ENCODE measurements at regions of chr3 and their contacts with region 1.

Region 1: DNA sequence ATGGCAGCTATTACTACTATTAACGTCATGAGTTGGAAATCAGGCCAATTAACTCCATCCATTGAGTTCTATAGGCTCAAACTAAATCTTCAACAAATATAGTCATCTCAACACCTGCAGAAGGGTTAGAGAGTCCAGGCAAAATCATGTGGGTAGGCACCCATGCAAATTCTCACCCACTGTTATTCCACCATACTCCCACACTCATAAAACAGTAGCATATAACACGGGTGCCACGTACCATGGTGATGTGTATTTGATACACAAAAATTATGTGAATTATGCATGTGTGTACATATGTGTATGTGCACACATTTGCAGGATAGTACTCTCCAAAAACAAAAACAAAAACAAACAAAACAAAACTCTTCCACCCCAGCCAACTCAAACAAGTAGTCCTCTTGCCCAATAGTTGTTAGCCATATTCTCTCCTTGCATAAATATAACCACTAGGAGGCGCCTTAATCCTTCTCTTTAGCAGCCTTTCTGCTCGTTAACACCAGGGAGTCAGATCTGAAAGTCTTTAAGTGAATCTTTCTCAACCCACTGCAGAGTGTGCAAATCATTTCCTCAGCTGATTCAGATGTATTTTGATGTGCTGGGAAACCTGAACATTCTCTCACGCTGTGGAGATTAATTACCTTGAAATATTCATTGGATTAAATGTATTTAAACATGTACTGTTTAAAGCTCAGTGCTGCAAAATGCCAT is 38.0 kb upstream of the COPB2 start:
- DNase-seq: no peak
- H3K4me3 ChIP-seq: no peak overlapping the region
- H3K27ac ChIP-seq: no peak overlapping the region
- H3K27me3 ChIP-seq: no peaks in the 10 kb centered on the region
- CTCF ChIP-seq: peak; percentile 59 to 96 (median 89)

Region 2: GRCh38 chr3:139506766-139507165 is 79.3 kb after region 1 on chr3:
- intact Hi-C with region 1: loop called in 1 of 2 experiments (anchors 2 kb)
- DNase-seq: peak in 3 of 10 donors; percentile 12 to 49 (median 39)
- H3K4me3 ChIP-seq: no peak overlapping the region
- H3K27ac ChIP-seq: no peak overlapping the region
- H3K27me3 ChIP-seq: no peaks in the 10 kb centered on the region
- CTCF ChIP-seq: peak in 50 of 56 donors; percentile 24 to 69 (median 42)

Measured in dorsolateral prefrontal cortex (tissue), 120 donors.